Activated T-helper 1 cell treated with anti-CD3 and anti-CD28 coated beads, Interleukin-12 subunit alpha, Interleukin-12 subunit beta, Interleukin-2, Interleukin-4 antibody, amounts not matched to agents 30 ng/mL and 10 ng/mL and 1 ng/mL, durations not matched to agents 14 hours and 24 hours and 36 hours (primary cell): ENCODE measurements at regions of chr3 and their contacts with region 1.

Region 1: GRCh38 chr3:152193673-152194267 is 75.0 kb upstream of the MBNL1 start:
- DNase-seq: no peak
- H3K4me3 Mint-ChIP-seq: peak overlapping the region; percentile 71
- H3K27ac Mint-ChIP-seq: peak overlapping the region; percentile 87
- H3K4me1 Mint-ChIP-seq: peaks cover 87% of the 10 kb centered on the region
- H3K27me3 Mint-ChIP-seq: no peaks in the 10 kb centered on the region

Region 2: GRCh38 chr3:151062611-151063010 is 1131.2 kb before region 1 on chr3:
- intact Hi-C with region 1: no loop called
- DNase-seq: no peak
- H3K4me3 Mint-ChIP-seq: no peak overlapping the region
- H3K27ac Mint-ChIP-seq: no peak overlapping the region
- H3K4me1 Mint-ChIP-seq: no peaks in the 10 kb centered on the region
- H3K27me3 Mint-ChIP-seq: peaks cover 3% of the 10 kb centered on the region

Region 3: GRCh38 chr3:151236736-151237135 is 957.0 kb before region 1 on chr3:
- intact Hi-C with region 1: no loop called
- DNase-seq: no peak
- H3K4me3 Mint-ChIP-seq: no peak overlapping the region
- H3K27ac Mint-ChIP-seq: no peak overlapping the region
- H3K4me1 Mint-ChIP-seq: peaks cover 10% of the 10 kb centered on the region
- H3K27me3 Mint-ChIP-seq: peaks cover 4% of the 10 kb centered on the region

Region 4: DNA sequence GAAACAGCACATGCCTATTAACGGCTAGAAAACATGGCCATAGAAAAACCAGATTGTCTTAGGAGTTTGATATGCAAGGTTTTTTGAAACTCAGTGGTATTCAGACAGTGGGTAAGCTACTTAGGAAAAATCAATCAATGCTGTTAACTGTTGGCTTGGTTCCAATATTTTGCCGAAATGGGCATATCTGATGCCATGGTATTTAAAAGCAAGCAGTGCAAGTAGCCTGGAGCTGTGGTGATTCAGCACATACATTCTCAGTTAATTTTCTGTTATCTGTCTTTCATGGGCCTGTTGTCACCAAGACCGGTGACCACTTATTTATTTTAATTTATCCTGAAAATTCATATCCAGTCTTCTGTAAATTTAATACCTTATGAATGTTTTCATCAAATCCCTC is 337.6 kb before region 1 on chr3:
- intact Hi-C with region 1: no loop called
- DNase-seq: no peak
- H3K4me3 Mint-ChIP-seq: no peak overlapping the region
- H3K27ac Mint-ChIP-seq: no peak overlapping the region
- H3K4me1 Mint-ChIP-seq: no peaks in the 10 kb centered on the region
- H3K27me3 Mint-ChIP-seq: peaks cover 12% of the 10 kb centered on the region

Region 5: GRCh38 chr3:152071924-152072323 is 121.8 kb before region 1 on chr3:
- intact Hi-C with region 1: loop called (anchors 2 kb)
- DNase-seq: no peak
- H3K4me3 Mint-ChIP-seq: no peak overlapping the region
- H3K27ac Mint-ChIP-seq: no peak overlapping the region
- H3K4me1 Mint-ChIP-seq: no peaks in the 10 kb centered on the region
- H3K27me3 Mint-ChIP-seq: peaks cover 2% of the 10 kb centered on the region

Region 6: GRCh38 chr3:152205097-152205593 is 11.4 kb after region 1 on chr3:
- intact Hi-C with region 1: loop called (anchors 1 kb)
- DNase-seq: no peak
- H3K4me3 Mint-ChIP-seq: peak overlapping the region; percentile 88
- H3K27ac Mint-ChIP-seq: peak overlapping the region; percentile 95
- H3K4me1 Mint-ChIP-seq: peaks cover 83% of the 10 kb centered on the region
- H3K27me3 Mint-ChIP-seq: no peaks in the 10 kb centered on the region

Region 7: DNA sequence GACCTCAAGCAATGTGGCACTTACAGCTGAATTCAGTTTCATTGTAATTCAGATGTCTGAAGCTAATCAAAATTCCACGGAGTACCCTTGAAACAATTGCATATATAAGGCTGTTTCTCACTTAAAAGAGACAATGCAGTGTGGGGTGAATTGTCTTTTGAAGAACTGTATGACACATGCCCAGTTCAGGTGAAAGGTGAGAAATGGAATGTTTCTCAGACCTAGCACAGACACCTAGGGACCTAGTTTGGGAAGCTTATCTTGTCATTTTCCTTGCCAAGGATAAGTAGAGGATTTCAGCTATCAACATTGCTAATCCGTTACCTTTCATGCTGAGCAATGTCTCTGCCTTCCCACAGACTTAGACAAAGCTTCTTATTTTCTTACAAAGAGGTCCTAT is 111.3 kb after region 1 on chr3:
- intact Hi-C with region 1: no loop called
- DNase-seq: no peak
- H3K4me3 Mint-ChIP-seq: no peak overlapping the region
- H3K27ac Mint-ChIP-seq: peak overlapping the region; percentile 34
- H3K4me1 Mint-ChIP-seq: peaks cover 91% of the 10 kb centered on the region
- H3K27me3 Mint-ChIP-seq: no peaks in the 10 kb centered on the region

Region 8: DNA sequence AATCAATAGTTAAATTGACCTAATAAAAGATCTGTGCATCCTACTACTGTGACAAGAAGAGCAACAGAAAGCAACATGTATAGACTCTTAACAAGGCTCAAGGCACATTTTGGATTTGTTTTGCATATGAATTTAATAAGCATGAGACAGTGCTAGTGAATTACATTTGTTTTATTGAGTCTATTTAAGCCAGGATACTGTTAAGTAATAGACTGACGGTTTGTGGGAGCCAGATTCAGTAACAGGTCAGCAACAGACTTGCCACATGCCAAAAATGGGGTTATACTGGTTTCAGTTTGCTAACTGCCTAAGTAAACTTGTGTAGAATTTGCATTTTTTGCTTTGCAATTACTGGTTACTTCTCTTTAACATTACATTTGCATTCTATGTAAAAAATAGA is 129.0 kb after region 1 on chr3:
- intact Hi-C with region 1: loop called (anchors 1 kb)
- DNase-seq: no peak
- H3K4me3 Mint-ChIP-seq: peak overlapping the region; percentile 1
- H3K27ac Mint-ChIP-seq: peak overlapping the region; percentile 34
- H3K4me1 Mint-ChIP-seq: peaks cover 80% of the 10 kb centered on the region
- H3K27me3 Mint-ChIP-seq: no peaks in the 10 kb centered on the region

Region 9: DNA sequence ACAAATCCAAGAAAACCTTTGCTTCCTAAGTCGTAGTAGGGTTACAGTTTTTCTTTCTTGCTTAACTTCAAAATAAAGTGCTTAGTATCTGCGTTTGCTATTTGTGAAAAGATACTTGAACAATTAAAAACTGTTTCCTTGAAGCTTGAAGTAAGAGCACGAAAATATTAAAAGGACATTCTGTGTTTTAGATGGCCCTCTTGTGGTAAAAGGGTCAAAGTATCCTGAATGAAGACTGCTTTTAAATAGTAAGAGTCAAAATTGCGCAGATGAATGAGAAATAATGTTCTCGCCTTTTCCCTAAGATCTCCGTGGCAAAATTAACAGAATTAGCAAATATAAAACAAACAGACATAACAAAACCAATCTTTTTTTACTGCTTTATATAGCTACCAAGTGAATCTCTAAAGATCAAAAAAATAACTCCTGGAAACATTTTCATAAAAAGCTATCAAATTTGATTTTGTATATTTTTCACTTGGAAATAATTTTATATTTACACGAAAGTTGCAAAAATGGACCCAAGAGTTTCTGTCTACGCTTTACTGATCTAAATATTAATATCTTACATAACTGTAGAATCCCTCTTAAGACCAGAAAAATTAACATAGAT is 250.4 kb after region 1 on chr3:
- intact Hi-C with region 1: loop called (anchors 5 kb)
- DNase-seq: no peak
- H3K4me3 Mint-ChIP-seq: no peak overlapping the region
- H3K27ac Mint-ChIP-seq: no peak overlapping the region
- H3K4me1 Mint-ChIP-seq: peaks cover 65% of the 10 kb centered on the region
- H3K27me3 Mint-ChIP-seq: no peaks in the 10 kb centered on the region